Caco-2 (cell line): ENCODE measurements at regions of chr3 and their contacts with region 1.

Region 1: GRCh38 chr3:14266361-14266760 is 87.7 kb downstream of the LSM3 start:
- DNase-seq: no peak
- H3K4me3 ChIP-seq: no peak overlapping the region
- H3K4me3 Mint-ChIP-seq: no peak overlapping the region
- H3K27ac Mint-ChIP-seq: peak overlapping the region; percentile 45
- H3K4me1 ChIP-seq: peaks cover 29% of the 10 kb centered on the region
- H3K4me1 Mint-ChIP-seq: peaks cover 34% of the 10 kb centered on the region
- H3K27me3 ChIP-seq: no peaks in the 10 kb centered on the region
- H3K27me3 Mint-ChIP-seq: no peaks in the 10 kb centered on the region
- CTCF ChIP-seq: no peak

Region 2: GRCh38 chr3:14418296-14419250 is 152.2 kb after region 1 on chr3:
- CTCF ChIA-PET with region 1: no interaction called
- POLR2A ChIA-PET with region 1: no interaction called
- intact Hi-C with region 1: loop called (anchors 5 kb)
- DNase-seq: peak; percentile 89
- H3K4me3 ChIP-seq: no peak overlapping the region
- H3K4me3 Mint-ChIP-seq: peak overlapping the region; percentile 35
- H3K27ac Mint-ChIP-seq: peak overlapping the region; percentile 88
- H3K4me1 ChIP-seq: peaks cover 37% of the 10 kb centered on the region
- H3K4me1 Mint-ChIP-seq: peaks cover 19% of the 10 kb centered on the region
- H3K27me3 ChIP-seq: no peaks in the 10 kb centered on the region
- H3K27me3 Mint-ChIP-seq: no peaks in the 10 kb centered on the region
- CTCF ChIP-seq: no peak